ENCODE measurements at regions of chr9 and their contacts with region 1.

Region 1: DNA sequence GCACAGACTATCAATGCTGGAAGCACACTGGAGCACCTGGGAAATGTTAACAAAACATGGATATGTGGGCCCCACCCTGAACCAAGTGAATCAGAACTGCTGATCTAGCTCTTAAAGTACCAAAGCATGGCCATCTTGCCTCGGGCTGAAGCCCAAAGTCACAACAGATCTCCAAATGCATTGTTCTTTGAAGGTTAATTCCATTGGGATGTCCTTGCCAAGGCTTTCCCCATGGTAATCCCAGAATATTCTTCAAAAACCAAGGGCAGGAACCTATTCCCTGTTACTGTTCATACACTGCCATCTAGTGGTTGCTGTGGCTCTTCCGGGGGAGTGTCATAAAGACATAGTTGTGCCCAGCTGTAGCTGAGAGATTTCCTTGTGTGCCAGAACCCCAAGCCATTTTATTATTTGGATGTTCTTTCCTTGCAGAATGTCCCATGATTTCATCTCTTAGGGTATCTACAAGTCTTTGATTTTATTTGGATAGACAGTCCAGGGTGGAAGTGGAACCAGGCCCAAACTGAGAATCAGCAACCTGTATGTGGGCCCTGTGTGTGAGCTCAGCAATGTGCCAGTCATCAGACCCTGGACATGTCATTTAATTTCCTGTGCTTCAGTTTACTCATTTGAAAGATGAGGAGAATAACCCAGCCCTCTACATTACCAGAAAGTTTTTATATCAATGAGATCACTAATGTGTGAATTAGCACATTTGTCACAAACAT is 290.0 kb downstream of the ACTL7B start:
- DNase-seq: no peak
- H3K4me3 ChIP-seq: no peak overlapping the region
- H3K27ac ChIP-seq: no peak overlapping the region
- H3K4me1 ChIP-seq: peaks cover 0 to 6% (median 5%) of the 10 kb centered on the region in 4 donors
- H3K27me3 ChIP-seq: no peaks in the 10 kb centered on the region
- CTCF ChIP-seq: peak; percentile 77 to 85 (median 83)
- EP300 ChIP-seq: no peak
- POLR2A ChIP-seq: no peak

Region 2: DNA sequence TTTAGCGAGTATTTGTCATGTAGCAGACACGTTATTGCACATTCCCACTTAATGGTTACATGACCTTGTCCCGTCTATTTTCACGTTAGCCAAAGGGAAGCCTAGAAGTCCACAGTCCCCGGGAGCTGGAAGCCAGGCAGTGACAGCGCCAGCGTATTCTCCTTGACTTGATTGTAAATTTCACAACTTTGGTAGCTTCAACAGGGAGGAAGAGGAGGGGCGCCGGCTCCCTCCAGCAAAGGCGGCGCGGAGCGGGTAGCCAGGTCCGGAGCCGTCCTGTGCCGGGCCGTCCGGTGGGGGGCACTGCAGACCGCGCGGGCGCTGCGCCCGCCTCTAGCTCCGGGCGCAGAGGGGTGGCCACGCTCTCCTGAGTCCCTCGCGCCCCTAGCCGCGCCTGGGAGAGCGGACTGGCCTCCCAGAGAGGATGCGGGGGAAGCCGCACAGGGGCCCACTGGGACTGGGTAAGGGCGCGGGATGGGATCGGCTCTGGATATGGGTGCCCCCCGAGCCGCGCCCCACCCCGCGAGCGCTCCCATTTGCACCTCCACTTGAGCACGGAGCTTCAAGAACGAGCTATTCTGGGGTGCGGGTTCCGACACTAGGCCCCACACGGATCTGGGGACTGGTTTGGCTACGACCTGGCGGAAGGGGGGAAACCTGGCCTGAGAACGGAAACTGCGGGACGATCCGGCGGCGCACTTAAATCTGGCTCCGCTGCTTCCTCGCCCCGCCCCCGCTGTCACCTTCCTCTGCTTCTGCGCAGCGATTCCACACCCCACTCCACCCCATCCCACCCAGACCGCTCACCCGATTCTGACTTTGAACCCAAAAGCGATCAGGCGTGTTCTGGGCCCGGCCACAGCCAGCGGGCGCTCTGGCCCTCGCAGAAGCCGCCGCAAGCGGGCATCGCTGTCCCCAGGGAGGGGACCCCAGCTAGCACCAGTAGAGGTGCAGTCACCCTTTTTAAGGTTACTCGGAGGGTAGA is 1100.1 kb before region 1 on chr9:
- intact Hi-C with region 1: loop called (anchors 1 kb)
- DNase-seq: no peak
- H3K4me3 ChIP-seq: peak overlapping the region; percentile 63 to 72 (median 67)
- H3K27ac ChIP-seq: peak overlapping the region; percentile 41 to 69 (median 46)
- H3K4me1 ChIP-seq: peaks cover 8 to 16% (median 16%) of the 10 kb centered on the region in 4 donors
- H3K27me3 ChIP-seq: peaks cover 0 to 23% (median 0%) of the 10 kb centered on the region in 4 donors
- CTCF ChIP-seq: peak; percentile 83 to 94 (median 92)
- EP300 ChIP-seq: no peak
- POLR2A ChIP-seq: no peak

Region 3: DNA sequence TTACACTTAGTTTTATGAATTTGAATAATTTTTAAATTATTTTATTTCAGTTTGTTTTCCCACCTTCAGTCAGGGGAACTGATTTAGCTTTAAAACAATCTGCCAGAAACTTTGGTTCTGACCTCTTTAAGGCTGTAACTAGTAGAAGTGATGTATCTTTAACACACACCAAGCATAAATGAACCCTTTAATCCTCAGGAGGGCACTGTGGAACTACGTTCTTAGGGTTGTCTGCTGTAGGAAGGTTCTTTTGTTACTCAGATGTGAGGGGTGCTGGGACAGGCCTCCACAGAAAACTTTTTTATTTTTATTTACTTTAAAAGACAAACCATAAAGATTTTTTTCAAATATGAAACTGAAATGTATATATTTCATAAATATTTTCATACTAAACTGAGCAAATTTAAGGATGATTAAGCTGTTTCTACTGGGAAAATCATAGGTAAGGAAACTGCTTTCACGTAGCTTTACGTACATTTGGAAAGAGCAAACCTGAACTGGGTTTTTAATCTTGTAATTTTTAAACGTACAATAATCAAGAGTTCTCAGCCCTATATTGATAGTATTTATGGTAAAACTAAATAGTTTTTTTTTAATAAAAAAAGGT is 1081.6 kb before region 1 on chr9:
- intact Hi-C with region 1: loop called (anchors 5 kb)
- DNase-seq: no peak
- H3K4me3 ChIP-seq: peak overlapping the region; percentile 80 to 94 (median 88)
- H3K27ac ChIP-seq: peak overlapping the region; percentile 33 to 95 (median 66)
- H3K4me1 ChIP-seq: peaks cover 6 to 47% (median 40%) of the 10 kb centered on the region in 4 donors
- H3K27me3 ChIP-seq: no peaks in the 10 kb centered on the region
- CTCF ChIP-seq: peak; percentile 48 to 75 (median 62)
- EP300 ChIP-seq: no peak
- POLR2A ChIP-seq: no peak

Region 4: GRCh38 chr9:107976765-107977164 is 589.0 kb before region 1 on chr9:
- intact Hi-C with region 1: no loop called
- DNase-seq: no peak
- H3K4me3 ChIP-seq: no peak overlapping the region
- H3K27ac ChIP-seq: peak overlapping the region in 1 of 4 donors; percentile 53
- H3K4me1 ChIP-seq: no peaks in the 10 kb centered on the region
- H3K27me3 ChIP-seq: no peaks in the 10 kb centered on the region
- CTCF ChIP-seq: no peak
- EP300 ChIP-seq: no peak
- POLR2A ChIP-seq: no peak

Region 5: DNA sequence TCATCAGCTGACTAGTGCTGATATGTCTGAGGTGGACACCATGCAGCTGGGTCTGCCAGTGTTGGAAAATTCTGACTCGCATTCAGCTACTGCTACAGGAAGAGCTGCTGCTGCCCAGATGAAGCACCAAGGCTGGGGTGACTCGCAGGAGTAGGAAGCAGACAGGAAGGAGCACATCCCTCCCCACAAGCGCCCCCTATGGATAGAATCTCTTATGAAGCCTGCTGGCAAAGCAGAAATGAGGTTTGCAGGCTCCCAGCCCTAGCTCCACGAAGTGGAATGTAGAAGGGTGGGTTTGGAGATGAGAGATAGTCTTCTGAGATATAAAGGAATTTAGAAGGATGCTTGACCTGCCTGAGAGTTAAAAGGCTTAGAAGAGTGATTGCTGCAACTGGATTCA is 153.1 kb before region 1 on chr9:
- intact Hi-C with region 1: loop called (anchors 10 kb)
- DNase-seq: no peak
- H3K4me3 ChIP-seq: no peak overlapping the region
- H3K27ac ChIP-seq: no peak overlapping the region
- H3K4me1 ChIP-seq: no peaks in the 10 kb centered on the region
- H3K27me3 ChIP-seq: no peaks in the 10 kb centered on the region
- CTCF ChIP-seq: no peak
- EP300 ChIP-seq: no peak
- POLR2A ChIP-seq: no peak

Region 6: DNA sequence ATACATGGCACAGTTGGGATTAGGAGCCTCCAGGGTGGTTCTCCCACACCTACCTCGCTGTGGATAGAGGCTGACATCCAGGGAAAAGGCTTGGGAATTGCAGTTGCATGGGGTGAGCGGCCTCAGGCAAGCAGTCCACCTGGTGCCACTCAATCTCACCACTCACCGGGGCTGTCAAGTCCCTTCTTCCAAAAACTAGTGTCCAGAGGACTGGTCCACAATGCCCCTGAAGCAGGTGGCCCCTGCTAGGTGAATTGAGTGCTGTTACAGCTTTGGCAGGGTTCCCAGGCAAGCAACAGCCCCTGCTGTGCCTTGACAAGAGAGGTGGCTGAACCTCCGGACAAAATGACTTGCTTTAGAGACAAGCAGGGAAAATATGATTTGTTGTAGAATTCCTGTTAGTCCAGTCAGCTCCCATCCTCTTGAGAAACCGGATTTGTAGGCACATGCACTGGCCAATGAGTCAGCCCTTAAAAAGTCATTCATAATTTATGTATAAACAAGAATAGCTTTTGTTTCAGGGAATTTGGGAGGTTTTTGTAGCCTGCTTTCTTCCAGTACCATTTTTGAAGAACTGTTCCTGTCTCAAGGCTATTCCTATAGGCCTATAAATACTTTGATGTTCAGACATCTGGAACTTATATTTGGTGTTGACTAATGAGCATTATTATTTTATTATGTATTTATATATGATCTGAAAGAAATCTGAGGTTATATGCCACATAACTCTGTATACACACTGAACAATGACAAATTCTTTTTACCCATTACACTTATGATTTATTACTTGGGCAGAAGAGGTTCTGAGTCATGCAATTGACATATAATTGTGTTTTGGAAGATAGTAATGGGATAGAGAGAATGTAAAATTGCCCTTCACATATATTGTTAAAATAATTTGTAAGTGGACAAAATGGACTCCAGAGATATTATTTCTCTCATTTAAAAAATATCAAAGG is 121.1 kb before region 1 on chr9:
- intact Hi-C with region 1: loop called (anchors 10 kb)
- DNase-seq: no peak
- H3K4me3 ChIP-seq: peak overlapping the region; percentile 22 to 50 (median 34)
- H3K27ac ChIP-seq: peak overlapping the region; percentile 68 to 84 (median 78)
- H3K4me1 ChIP-seq: peaks cover 0 to 54% (median 36%) of the 10 kb centered on the region in 4 donors
- H3K27me3 ChIP-seq: no peaks in the 10 kb centered on the region
- CTCF ChIP-seq: no peak
- EP300 ChIP-seq: no peak
- POLR2A ChIP-seq: no peak

Region 7: GRCh38 chr9:108521063-108521590 is 44.7 kb before region 1 on chr9:
- intact Hi-C with region 1: no loop called
- DNase-seq: no peak
- H3K4me3 ChIP-seq: no peak overlapping the region
- H3K27ac ChIP-seq: no peak overlapping the region
- H3K4me1 ChIP-seq: no peaks in the 10 kb centered on the region
- H3K27me3 ChIP-seq: no peaks in the 10 kb centered on the region
- CTCF ChIP-seq: no peak
- EP300 ChIP-seq: no peak
- POLR2A ChIP-seq: no peak

Region 8: GRCh38 chr9:108834959-108835696 is 269.3 kb after region 1 on chr9:
- intact Hi-C with region 1: no loop called
- DNase-seq: no peak
- H3K4me3 ChIP-seq: no peak overlapping the region
- H3K27ac ChIP-seq: no peak overlapping the region
- H3K4me1 ChIP-seq: no peaks in the 10 kb centered on the region
- H3K27me3 ChIP-seq: no peaks in the 10 kb centered on the region
- CTCF ChIP-seq: no peak
- EP300 ChIP-seq: no peak
- POLR2A ChIP-seq: no peak